ENCODE measurements at regions of chr2 and their contacts with region 1.

Region 1: GRCh38 chr2:235746257-235747084 is 252.6 kb downstream of the AGAP1 start:
- H3K4me3 ChIP-seq: no peak overlapping the region
- H3K27ac ChIP-seq: no peak overlapping the region
- H3K4me1 ChIP-seq: no peaks in the 10 kb centered on the region
- CTCF ChIP-seq: peak; percentile 55

Region 2: GRCh38 chr2:235595422-235596010 is 151.0 kb before region 1 on chr2:
- CTCF ChIA-PET with region 1: interaction called, 173 read pairs
- POLR2A ChIA-PET with region 1: interaction called, 3 read pairs
- H3K4me3 ChIP-seq: no peak overlapping the region
- H3K27ac ChIP-seq: no peak overlapping the region
- H3K4me1 ChIP-seq: 0 out of 2 replicates have a peak, but pooled peaks cover 2% of the 10 kb centered on the region
- CTCF ChIP-seq: peak; percentile 77

Region 3: GRCh38 chr2:235677276-235677788 is 69.1 kb before region 1 on chr2:
- CTCF ChIA-PET with region 1: interaction called, 13 read pairs
- POLR2A ChIA-PET with region 1: no interaction called
- H3K4me3 ChIP-seq: no peak overlapping the region
- H3K27ac ChIP-seq: no peak overlapping the region
- H3K4me1 ChIP-seq: peaks cover 10% of the 10 kb centered on the region; the same call in 1 of the 2 replicates
- CTCF ChIP-seq: no peak

Region 4: GRCh38 chr2:235728800-235729556 is 17.5 kb before region 1 on chr2:
- CTCF ChIA-PET with region 1: interaction called, 17 read pairs
- POLR2A ChIA-PET with region 1: no interaction called
- H3K4me3 ChIP-seq: no peak overlapping the region
- H3K27ac ChIP-seq: no peak overlapping the region
- H3K4me1 ChIP-seq: no peaks in the 10 kb centered on the region; the same call in 1 of the 2 replicates
- CTCF ChIP-seq: no peak

Region 5: GRCh38 chr2:235757212-235757611 is 10.7 kb after region 1 on chr2:
- CTCF ChIA-PET with region 1: interaction called, 11 read pairs
- POLR2A ChIA-PET with region 1: no interaction called
- H3K4me3 ChIP-seq: no peak overlapping the region
- H3K27ac ChIP-seq: no peak overlapping the region
- H3K4me1 ChIP-seq: no peaks in the 10 kb centered on the region
- CTCF ChIP-seq: no peak

Measured in HEK293 (cell line).